CD8-positive, alpha-beta T cell (primary cell): ENCODE measurements at regions of chr19 and their contacts with region 1.

Region 1: GRCh38 chr19:10717356-10718204 is at the start of gene DNM2:
- DNase-seq: peak; percentile 92 to 100 (median 97)
- ATAC-seq: peak; percentile 84
- H3K4me3 ChIP-seq: peak within 1 kb of the TSS; percentile 79 to 90
- H3K4me3 Mint-ChIP-seq: peak within 1 kb of the TSS; percentile 95
- H3K27ac ChIP-seq: peak within 1 kb of the TSS; percentile 71 to 81
- H3K27ac Mint-ChIP-seq: peak within 1 kb of the TSS; percentile 92
- H3K4me1 ChIP-seq: peaks cover 38% of the 10 kb centered on the region
- H3K4me1 Mint-ChIP-seq: peaks cover 42% of the 10 kb centered on the region
- H3K27me3 ChIP-seq: no peaks in the 10 kb centered on the region
- H3K27me3 Mint-ChIP-seq: no peaks in the 10 kb centered on the region
- CTCF ChIP-seq: peak; percentile 64
- total RNA-seq, gene DNM2: 309 to 337 TPM

Region 2: GRCh38 chr19:10085641-10086590 is 631.7 kb before region 1 on chr19 and contains the start of gene SHFL:
- CTCF ChIA-PET with region 1: no interaction called
- POLR2A ChIA-PET with region 1: no interaction called
- intact Hi-C with region 1: no loop called
- DNase-seq: peak; percentile 70 to 93 (median 83)
- ATAC-seq: peak; percentile 93
- H3K4me3 ChIP-seq: peak within 1 kb of the TSS; percentile 99 to 100
- H3K4me3 Mint-ChIP-seq: peak within 1 kb of the TSS; percentile 87
- H3K27ac ChIP-seq: peak within 1 kb of the TSS; percentile 73 to 88
- H3K27ac Mint-ChIP-seq: peak within 1 kb of the TSS; percentile 90
- H3K4me1 ChIP-seq: peaks cover 6% of the 10 kb centered on the region
- H3K4me1 Mint-ChIP-seq: peaks cover 10% of the 10 kb centered on the region
- H3K27me3 ChIP-seq: no peaks in the 10 kb centered on the region
- H3K27me3 Mint-ChIP-seq: no peaks in the 10 kb centered on the region
- CTCF ChIP-seq: no peak
- total RNA-seq, gene SHFL: 56.4 to 61.6 TPM

Region 3: GRCh38 chr19:10565567-10566407 is 151.8 kb before region 1 on chr19 and contains the start of gene KRI1:
- CTCF ChIA-PET with region 1: interaction called, 4 read pairs
- POLR2A ChIA-PET with region 1: no interaction called
- intact Hi-C with region 1: loop called in 1 of 2 experiments (anchors 5 kb)
- DNase-seq: peak; percentile 97 to 100 (median 99)
- ATAC-seq: peak; percentile 54
- H3K4me3 ChIP-seq: peak within 1 kb of the TSS; percentile 95 to 97
- H3K4me3 Mint-ChIP-seq: peak within 1 kb of the TSS; percentile 98
- H3K27ac ChIP-seq: peak within 1 kb of the TSS; percentile 83 to 85
- H3K27ac Mint-ChIP-seq: peak within 1 kb of the TSS; percentile 95
- H3K4me1 ChIP-seq: peaks cover 28% of the 10 kb centered on the region
- H3K4me1 Mint-ChIP-seq: peaks cover 48% of the 10 kb centered on the region
- H3K27me3 ChIP-seq: no peaks in the 10 kb centered on the region
- H3K27me3 Mint-ChIP-seq: no peaks in the 10 kb centered on the region
- CTCF ChIP-seq: no peak
- total RNA-seq, gene KRI1: 29.8 to 33.9 TPM

Region 4: DNA sequence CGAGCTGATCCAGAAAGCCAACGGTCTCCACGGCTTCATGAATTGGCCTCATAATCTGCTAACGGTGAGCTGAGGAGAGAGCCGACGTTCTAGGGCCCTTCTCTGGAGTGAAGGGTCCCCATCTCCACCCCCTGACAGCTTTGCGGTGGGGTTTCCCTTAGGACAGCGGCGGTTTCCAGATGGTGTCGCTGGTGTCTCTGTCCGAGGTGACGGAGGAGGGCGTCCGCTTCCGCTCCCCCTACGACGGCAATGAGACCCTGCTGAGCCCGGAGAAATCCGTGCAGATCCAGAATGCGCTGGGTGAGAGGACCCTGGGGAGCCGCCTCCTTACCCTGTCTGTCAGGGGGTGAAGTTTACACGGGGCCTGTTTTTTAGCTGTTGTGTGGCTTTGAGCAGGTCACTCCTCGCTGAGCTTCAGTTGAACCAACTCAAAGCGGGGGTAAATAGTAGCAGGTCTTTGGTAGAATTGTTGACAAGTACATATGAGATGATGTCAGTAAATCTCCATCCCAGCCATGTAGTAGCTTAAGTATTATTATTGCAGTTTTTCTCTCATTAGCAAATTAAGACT is 15.5 kb before region 1 on chr19:
- CTCF ChIA-PET with region 1: interaction called, 40 read pairs
- POLR2A ChIA-PET with region 1: interaction called, 14 read pairs
- intact Hi-C with region 1: loop called in 1 of 2 experiments (anchors 1 kb)
- DNase-seq: peak in 3 of 9 experiments; percentile 16 to 54 (median 52)
- ATAC-seq: peak; percentile 20
- H3K4me3 ChIP-seq: peak overlapping the region; percentile 80 to 81
- H3K4me3 Mint-ChIP-seq: peak overlapping the region; percentile 88
- H3K27ac ChIP-seq: peak overlapping the region in 1 of 2 experiments; percentile 48
- H3K27ac Mint-ChIP-seq: no peak overlapping the region
- H3K4me1 ChIP-seq: peaks cover 11% of the 10 kb centered on the region
- H3K4me1 Mint-ChIP-seq: peaks cover 11% of the 10 kb centered on the region
- H3K27me3 ChIP-seq: no peaks in the 10 kb centered on the region
- H3K27me3 Mint-ChIP-seq: peaks cover 5% of the 10 kb centered on the region
- CTCF ChIP-seq: no peak

Region 5: DNA sequence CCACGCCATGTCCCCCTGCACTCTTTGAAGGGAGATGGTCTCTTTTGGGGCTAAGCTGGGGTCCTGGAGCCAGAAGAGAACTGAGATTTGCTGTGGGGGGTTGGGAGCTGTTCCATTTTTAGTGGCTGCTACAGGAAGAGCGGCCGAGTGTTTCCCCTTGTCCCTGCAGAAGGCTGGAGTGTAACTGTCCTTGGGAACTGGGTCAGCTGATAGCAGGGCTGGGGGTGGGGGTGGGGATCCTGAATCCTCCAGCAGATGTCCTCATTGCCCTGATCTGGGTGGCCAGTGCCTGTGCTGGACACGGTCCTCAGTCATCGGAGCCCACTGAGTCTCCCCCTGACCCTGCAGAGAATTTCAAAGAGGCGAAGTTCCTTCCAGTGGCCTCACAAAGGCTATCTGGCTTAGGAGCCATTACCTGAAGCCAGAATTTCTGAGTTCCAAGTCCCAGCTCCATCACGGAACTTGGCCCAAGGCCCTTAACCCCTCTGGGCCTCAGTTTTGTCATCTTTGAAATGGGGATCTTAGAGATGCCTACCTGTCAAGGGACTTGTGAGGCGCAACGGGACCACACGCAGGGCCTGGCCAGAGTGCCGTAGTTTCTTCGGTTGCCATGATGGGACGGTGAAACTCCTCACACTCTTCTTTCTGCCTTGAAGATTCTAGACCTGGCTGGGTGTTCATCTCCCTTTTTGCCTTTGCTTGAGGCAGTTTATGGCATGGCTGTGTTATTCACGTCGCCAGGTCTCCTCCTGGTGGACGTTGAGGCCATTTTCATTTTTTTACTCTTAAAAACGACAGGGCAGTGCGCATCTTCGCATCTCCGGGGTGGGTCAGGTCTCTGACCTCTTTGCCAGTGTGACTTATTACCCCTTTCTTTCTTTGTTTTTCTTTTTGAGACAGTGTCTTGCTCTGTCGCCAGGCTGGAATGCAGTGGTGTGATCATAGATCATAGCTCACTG is 52.2 kb after region 1 on chr19:
- CTCF ChIA-PET with region 1: interaction called, 49 read pairs
- POLR2A ChIA-PET with region 1: interaction called, 4 read pairs
- intact Hi-C with region 1: loop called (anchors 1 kb)
- DNase-seq: peak in 4 of 9 experiments; percentile 33 to 63 (median 48)
- ATAC-seq: peak; percentile 61
- H3K4me3 ChIP-seq: no peak overlapping the region
- H3K4me3 Mint-ChIP-seq: no peak overlapping the region
- H3K27ac ChIP-seq: no peak overlapping the region
- H3K27ac Mint-ChIP-seq: peak overlapping the region; percentile 69
- H3K4me1 ChIP-seq: no peaks in the 10 kb centered on the region
- H3K4me1 Mint-ChIP-seq: peaks cover 28% of the 10 kb centered on the region
- H3K27me3 ChIP-seq: no peaks in the 10 kb centered on the region
- H3K27me3 Mint-ChIP-seq: no peaks in the 10 kb centered on the region
- CTCF ChIP-seq: peak; percentile 19

Region 6: GRCh38 chr19:10835754-10836477 is 118.3 kb after region 1 on chr19 and contains the start of gene TMED1:
- CTCF ChIA-PET with region 1: interaction called, 24 read pairs
- POLR2A ChIA-PET with region 1: interaction called, 27 read pairs
- intact Hi-C with region 1: loop called (anchors 1 kb)
- DNase-seq: peak; percentile 82 to 98 (median 93)
- ATAC-seq: peak; percentile 86
- H3K4me3 ChIP-seq: peak within 1 kb of the TSS; percentile 88 to 96
- H3K4me3 Mint-ChIP-seq: peak within 1 kb of the TSS; percentile 98
- H3K27ac ChIP-seq: peak within 1 kb of the TSS; percentile 87 to 96
- H3K27ac Mint-ChIP-seq: peak within 1 kb of the TSS; percentile 99
- H3K4me1 ChIP-seq: peaks cover 14% of the 10 kb centered on the region
- H3K4me1 Mint-ChIP-seq: peaks cover 9% of the 10 kb centered on the region
- H3K27me3 ChIP-seq: no peaks in the 10 kb centered on the region
- H3K27me3 Mint-ChIP-seq: no peaks in the 10 kb centered on the region
- CTCF ChIP-seq: no peak
- total RNA-seq, gene TMED1: 8.2 to 13.5 TPM

Region 7: GRCh38 chr19:11090054-11090900 is 372.7 kb after region 1 on chr19:
- CTCF ChIA-PET with region 1: no interaction called
- POLR2A ChIA-PET with region 1: no interaction called
- intact Hi-C with region 1: loop called in 1 of 2 experiments (anchors 1 kb)
- DNase-seq: peak; percentile 95 to 98 (median 98)
- ATAC-seq: peak; percentile 84
- H3K4me3 ChIP-seq: peak overlapping the region; percentile 78 to 93
- H3K4me3 Mint-ChIP-seq: peak overlapping the region; percentile 86
- H3K27ac ChIP-seq: peak overlapping the region; percentile 97 to 99
- H3K27ac Mint-ChIP-seq: peak overlapping the region; percentile 96
- H3K4me1 ChIP-seq: peaks cover 44% of the 10 kb centered on the region
- H3K4me1 Mint-ChIP-seq: peaks cover 47% of the 10 kb centered on the region
- H3K27me3 ChIP-seq: no peaks in the 10 kb centered on the region
- H3K27me3 Mint-ChIP-seq: no peaks in the 10 kb centered on the region
- CTCF ChIP-seq: no peak